Mammary epithelial cell (primary cell): ENCODE measurements at regions of chr16 and their contacts with region 1.

Region 1: DNA sequence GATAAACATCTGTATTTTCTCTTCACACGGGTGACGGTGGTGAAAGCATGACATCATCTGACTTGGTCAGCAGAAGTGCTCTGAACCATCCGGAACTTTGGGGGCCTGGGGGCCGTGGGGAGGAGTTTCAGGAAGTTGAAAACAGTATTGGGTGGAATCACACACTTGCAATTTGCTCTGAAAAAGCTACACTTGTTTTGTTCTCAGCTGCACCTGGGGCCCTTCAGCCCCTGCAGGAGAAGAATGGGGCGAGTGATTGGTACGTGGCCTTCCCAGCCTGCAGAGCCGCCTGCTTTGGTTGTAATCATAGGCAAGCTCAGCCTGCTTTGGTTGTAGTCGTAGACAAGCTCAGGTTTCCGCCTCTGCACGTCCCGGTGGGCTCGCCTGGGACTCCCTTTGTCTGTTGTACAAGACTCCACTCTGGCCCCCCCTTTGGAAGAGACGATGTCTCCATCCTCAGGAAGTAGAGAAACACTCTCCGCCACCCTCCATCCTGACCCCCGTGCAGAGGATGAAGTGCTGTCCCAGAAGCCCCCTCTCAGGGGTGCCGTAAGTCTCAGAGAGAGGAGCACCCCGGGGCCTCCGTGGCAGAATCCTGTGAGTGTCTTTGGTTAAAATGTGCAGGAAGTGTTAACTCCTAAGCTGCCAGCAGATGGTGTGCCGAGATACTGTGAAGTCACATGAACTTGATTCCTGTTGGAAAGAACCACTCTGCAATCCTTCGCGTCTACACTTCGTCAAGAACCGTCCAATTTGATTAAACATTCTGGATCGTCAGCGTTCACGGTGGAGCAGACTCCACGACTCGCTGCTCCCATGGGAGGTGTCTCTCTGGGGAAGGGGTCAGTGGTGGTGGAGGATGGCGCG is 5.4 kb downstream of the BANP start:
- DNase-seq: no peak
- H3K4me3 ChIP-seq: no peak overlapping the region
- H3K27ac ChIP-seq: no peak overlapping the region
- H3K4me1 ChIP-seq: peaks cover 26% of the 10 kb centered on the region
- H3K27me3 ChIP-seq: no peaks in the 10 kb centered on the region
- CTCF ChIP-seq: peak; percentile 14 to 22

Region 2: DNA sequence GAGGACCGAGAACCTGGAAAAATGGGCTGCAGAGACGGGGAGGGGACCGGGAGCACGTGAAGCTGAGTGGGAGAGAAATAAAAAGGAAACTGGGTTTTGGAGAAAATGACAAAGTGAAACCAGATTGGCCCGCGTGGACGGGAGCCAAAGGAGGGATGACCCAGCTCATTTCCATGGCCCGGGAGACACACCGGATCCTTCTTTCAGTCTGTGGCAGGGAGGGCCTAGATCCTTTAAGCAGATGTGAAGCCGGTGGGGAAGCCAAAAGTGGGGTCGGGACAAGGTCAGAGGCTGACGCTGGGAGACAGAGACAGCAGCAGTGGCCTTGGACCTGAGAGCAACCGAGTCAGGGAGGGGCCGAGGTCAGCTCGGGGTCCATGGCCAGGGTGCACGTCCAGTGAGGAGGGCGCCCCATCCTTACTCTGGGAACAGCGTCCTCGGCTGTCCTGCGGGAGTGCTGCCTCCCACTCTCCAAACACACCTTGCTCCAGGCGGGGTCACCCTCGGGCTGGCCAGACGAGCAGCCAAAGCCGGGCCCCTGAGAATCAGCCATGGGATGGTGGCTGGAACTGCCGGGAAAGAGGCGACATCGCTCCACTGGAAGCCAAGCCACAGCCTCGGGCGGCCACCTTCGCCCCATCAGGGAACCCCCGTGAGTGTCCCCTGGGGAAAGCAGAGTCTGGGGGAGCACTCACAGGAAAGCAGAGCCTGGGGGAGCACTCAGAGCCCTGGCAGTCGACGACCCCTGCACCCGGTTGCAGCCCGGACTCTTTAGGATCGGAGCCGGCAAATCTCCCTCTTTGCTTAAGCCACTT is 37.5 kb before region 1 on chr16:
- CTCF ChIA-PET with region 1: no interaction called
- dilution Hi-C with region 1: loop called (anchors 5 kb)
- in situ Hi-C with region 1: no loop called
- intact Hi-C with region 1: no loop called
- DNase-seq: no peak
- H3K4me3 ChIP-seq: no peak overlapping the region
- H3K27ac ChIP-seq: no peak overlapping the region
- H3K4me1 ChIP-seq: peaks cover 3% of the 10 kb centered on the region
- H3K27me3 ChIP-seq: no peaks in the 10 kb centered on the region
- CTCF ChIP-seq: no peak

Region 3: GRCh38 chr16:87930456-87930855 is 26.1 kb before region 1 on chr16:
- CTCF ChIA-PET with region 1: no interaction called
- dilution Hi-C with region 1: no loop called
- in situ Hi-C with region 1: no loop called
- intact Hi-C with region 1: no loop called
- DNase-seq: no peak
- H3K4me3 ChIP-seq: no peak overlapping the region
- H3K27ac ChIP-seq: no peak overlapping the region
- H3K4me1 ChIP-seq: peaks cover under 1% of the 10 kb centered on the region
- H3K27me3 ChIP-seq: peaks cover 1% of the 10 kb centered on the region
- CTCF ChIP-seq: peak in 1 of 2 donors; percentile 31

Region 4: GRCh38 chr16:88004391-88004790 is 47.8 kb after region 1 on chr16:
- CTCF ChIA-PET with region 1: no interaction called
- dilution Hi-C with region 1: loop called (anchors 5 kb)
- in situ Hi-C with region 1: no loop called
- intact Hi-C with region 1: no loop called
- DNase-seq: no peak
- H3K4me3 ChIP-seq: no peak overlapping the region
- H3K27ac ChIP-seq: no peak overlapping the region
- H3K4me1 ChIP-seq: no peaks in the 10 kb centered on the region
- H3K27me3 ChIP-seq: no peaks in the 10 kb centered on the region
- CTCF ChIP-seq: no peak

Region 5: DNA sequence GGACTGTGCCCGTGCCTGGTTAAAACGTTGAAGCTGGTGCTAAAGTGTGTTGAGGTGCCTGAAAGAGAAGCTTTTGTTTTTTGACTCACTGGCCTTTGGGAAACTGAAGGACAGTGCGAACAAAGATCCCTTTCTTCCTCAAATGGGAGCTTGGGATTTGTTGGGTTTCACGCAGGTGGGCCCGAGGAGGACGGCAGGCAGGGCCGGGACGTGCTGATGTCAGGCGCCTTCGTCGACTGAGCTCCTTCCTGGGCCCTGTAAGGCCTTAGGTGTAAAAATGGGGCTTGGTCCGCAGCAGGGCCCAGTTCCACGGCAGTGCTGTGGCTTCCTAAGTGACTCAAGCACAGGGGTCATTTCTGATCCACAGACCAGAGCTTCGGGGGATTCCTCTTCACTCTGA is 101.5 kb after region 1 on chr16:
- CTCF ChIA-PET with region 1: no interaction called
- dilution Hi-C with region 1: loop called (anchors 5 kb)
- in situ Hi-C with region 1: no loop called
- intact Hi-C with region 1: no loop called
- DNase-seq: no peak
- H3K4me3 ChIP-seq: no peak overlapping the region
- H3K27ac ChIP-seq: no peak overlapping the region
- H3K4me1 ChIP-seq: no peaks in the 10 kb centered on the region
- H3K27me3 ChIP-seq: no peaks in the 10 kb centered on the region
- CTCF ChIP-seq: no peak